Posterior vena cava (tissue), 2 donors: ENCODE measurements at regions of chr2 and their contacts with region 1.

Region 1: DNA sequence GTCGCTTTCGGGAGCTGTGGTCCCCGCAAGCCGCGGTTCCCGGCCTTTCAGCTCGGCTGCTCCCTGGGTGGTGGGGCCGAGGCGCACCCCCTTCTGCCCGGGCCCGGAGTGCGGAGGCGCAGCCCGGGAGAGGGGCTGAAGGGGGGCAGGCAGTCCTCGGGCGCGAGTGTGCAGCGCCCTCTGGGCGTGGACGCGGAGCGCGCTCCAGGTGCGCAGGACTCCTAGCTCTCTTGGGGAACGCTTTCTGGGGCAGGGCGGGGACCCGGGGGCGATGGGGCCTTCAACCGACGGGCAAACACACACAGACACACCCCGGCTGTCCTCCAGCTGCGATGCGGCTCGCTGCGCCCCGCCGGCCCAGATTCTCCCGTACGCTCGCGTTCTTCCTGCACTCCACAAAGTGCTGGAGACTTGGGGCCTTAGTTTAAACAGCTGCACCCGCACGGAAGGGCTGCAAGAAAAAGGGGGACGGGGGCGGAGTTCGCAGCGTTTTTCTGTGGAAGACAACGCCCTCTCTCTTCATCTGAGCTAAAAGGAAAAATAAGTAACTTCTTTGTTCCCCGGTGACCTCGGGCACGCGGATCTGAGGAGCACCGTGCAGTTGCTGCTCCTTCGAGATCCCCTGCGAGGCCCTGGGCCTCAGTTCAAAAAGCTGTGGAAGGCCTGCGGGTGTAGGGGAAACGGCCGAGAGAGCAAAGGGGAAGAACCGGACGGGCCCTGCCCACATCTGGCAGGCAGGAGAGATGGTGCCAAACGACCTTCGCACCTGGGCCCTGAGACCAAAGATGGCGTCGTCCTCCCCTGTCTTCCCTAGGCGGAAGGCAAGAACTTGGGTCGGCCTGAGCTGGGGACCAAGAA is 593 bp upstream of the SDC1 start:
- DNase-seq: peak; percentile 86

Region 2: DNA sequence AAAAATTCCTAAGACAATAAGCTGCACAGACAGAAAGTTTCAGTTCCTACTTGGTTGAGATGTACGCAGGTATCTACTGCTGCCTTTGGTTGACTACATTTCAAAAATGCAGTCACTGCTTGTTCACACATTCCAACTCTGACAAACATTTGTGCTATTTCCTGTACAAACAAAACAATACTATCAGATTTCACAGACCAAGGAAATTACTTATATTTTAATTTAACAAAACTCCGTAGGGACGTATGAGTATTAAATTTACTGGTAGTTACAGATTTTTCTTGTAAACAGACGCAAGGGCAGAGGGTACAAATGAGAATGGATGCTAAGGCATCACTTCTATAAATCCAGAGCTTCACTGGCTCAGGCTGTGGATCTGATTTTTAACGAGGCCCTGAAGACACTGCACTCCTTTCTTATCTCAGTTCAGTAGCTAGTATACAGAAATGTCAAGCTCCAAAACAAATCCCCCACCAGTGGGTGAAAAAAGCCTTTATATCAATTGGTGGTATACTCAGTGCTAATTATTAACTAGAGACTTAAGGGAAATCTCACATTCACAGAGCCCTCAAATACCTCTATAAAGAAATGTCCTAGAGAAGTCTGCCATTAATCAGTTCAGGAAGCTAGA is 292.1 kb before region 1 on chr2:
- intact Hi-C with region 1: no loop called
- DNase-seq: no peak

Region 3: GRCh38 chr2:20135631-20136050 is 89.9 kb before region 1 on chr2:
- intact Hi-C with region 1: loop called in 1 of 2 experiments (anchors 10 kb)
- DNase-seq: no peak

Region 4: DNA sequence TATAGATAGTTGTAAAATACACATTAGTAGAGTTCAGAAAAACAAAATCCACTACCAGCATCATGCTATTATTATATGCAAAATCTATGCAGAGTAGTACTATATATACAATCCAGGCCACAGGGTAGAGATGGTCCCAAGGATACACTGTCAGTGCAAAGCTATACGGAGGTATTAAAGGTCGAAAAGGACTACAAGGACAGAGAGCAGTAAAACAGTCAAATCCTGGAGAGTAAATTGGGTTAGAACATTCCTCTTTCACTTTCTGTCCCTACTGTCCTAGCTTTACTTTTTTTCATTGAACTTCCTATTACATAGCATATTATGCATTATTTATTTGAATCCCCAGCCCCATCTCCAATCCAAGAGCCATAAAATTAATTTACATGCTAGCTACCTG is 39.1 kb after region 1 on chr2:
- intact Hi-C with region 1: no loop called
- DNase-seq: no peak

Region 5: GRCh38 chr2:21571686-21572085 is 1346.2 kb after region 1 on chr2:
- intact Hi-C with region 1: no loop called
- DNase-seq: no peak